PC-3 (cell line): ENCODE measurements at regions of chr11 and their contacts with region 1.

Region 1: DNA sequence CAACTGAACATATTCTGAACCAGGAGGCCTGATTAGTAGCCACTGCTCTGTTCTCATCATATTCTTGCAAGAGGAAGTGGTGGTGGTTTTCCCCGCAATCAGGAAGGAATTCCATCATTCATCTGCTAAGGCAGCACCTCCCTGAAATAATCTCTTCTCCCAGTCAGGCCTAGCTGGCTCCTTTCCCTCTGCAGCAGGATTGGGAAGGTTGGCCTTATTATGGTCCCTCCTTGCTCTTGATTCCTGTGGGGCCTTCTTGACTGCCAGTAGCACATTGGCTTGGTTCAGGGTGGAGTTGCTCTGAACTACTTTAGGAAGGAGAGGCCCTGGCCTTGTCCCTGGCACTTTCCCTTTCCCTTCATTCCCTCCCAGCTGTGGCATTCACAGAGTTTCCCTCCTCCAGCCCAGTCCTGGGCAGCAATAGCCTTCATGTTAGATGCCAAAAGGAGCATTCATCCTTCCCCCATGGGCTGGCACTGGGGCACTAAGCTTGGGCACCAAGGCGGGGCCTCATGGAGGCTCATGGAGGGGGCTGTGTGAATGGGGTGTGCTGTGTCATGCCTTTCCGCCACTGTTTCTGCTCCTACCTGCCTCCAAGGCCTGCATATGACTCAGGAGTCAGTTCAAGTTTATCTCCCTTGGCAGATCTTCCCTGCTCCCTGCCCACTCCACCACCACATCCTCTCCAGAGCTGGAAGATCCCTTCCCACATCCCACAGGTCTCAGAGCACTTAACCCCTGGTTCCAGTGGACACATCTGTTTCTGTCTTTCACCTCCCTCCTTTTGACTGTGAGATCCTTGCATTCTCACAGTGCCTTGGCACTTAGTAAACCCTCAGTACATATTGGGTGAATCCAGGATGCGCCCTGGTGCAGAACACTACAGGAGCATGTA is 27.6 kb upstream of the CD44 start:
- DNase-seq: peak; percentile 88
- ATAC-seq: peak; percentile 87
- H3K4me3 ChIP-seq: no peak overlapping the region
- H3K27ac ChIP-seq: peak overlapping the region; percentile 96
- H3K4me1 ChIP-seq: peaks cover 43% of the 10 kb centered on the region
- H3K27me3 ChIP-seq: no peaks in the 10 kb centered on the region
- CTCF ChIP-seq: no peak

Region 2: DNA sequence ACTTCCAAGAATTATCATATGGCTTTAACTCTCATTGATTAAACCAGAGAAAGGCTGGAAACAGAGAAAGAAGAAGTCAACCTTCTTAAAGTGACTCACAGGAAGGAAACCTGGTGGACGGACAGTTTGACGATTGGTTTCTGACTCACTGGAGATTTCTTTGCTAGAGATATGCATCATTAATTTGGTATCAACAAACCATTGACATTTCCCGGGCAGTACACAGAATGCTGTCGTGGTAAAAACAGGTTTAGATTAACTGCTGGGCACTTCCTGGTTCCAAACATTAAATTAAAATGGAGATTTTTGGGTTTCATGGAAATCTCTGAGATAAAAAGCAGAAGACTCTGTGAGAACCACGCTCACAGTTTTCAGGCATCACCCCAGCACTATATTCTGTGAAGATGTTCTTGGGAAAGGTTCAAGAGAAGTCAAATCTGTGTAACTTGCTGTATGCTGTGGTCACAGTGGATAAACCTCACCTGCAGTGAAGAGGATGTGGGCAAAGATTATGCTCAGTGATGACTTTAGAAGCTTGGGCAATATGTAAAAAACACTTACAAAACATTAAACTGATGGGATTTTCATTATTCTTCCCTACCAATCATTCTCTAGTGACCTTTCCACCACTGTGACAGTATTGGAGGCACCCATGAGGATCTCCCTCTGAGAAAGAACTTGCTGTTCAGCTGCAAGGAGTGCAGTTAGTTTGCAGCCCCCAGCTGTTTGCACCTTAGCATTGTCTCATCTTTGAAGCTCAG is 33.5 kb before region 1 on chr11:
- CTCF ChIA-PET with region 1: no interaction called
- POLR2A ChIA-PET with region 1: no interaction called
- intact Hi-C with region 1: loop called (anchors 1 kb)
- DNase-seq: peak; percentile 92
- ATAC-seq: peak; percentile 74
- H3K4me3 ChIP-seq: peak overlapping the region; percentile 18; the same call in 1 of the 2 replicates
- H3K27ac ChIP-seq: peak overlapping the region; percentile 98
- H3K4me1 ChIP-seq: peaks cover 51% of the 10 kb centered on the region
- H3K27me3 ChIP-seq: no peaks in the 10 kb centered on the region
- CTCF ChIP-seq: no peak